ENCODE measurements at regions of chr21 and their contacts with region 1.

Region 1: DNA sequence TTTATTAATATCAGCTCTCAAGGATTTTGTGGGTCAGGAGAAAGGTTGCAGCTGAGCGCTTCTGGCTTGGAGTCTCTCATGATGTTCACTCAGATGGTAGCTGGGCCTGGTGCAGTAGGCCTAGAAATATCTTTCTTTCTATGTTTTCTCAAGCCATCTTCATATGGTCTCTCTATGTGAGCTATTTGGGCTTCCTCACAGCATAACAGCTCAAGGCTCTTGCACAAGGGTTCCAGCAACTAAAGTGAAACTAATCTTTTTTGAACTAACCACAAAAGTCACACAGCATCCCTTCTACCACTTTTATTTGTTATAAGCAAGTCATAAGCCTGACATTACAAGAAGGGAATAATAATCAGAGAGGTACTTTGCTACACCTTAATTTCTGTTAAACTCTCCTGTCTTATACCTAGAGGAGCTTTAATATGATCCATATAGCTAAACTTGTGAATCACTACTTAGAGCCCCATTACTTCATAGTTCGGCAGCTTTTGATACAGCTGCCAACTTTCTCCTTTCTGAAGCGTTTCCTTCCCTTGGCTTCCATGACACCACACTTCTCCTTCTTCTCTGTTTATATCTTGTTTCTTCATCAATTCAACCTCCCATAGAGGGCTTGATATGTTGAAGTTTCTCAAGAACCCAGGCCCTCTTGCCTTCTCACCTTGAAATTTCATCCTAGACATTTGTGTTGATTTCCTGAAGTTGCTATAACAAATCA is 720.2 kb downstream of the LTN1 start:
- DNase-seq: no peak
- H3K4me3 Mint-ChIP-seq: no peak overlapping the region
- H3K27ac Mint-ChIP-seq: no peak overlapping the region
- H3K4me1 Mint-ChIP-seq: no peaks in the 10 kb centered on the region
- H3K27me3 Mint-ChIP-seq: no peaks in the 10 kb centered on the region
- CTCF ChIP-seq: no peak

Region 2: GRCh38 chr21:28186604-28187003 is 85.8 kb before region 1 on chr21:
- CTCF ChIA-PET with region 1: interaction called, 3 read pairs
- POLR2A ChIA-PET with region 1: no interaction called
- intact Hi-C with region 1: loop called (anchors 10 kb)
- DNase-seq: no peak
- H3K4me3 Mint-ChIP-seq: no peak overlapping the region
- H3K27ac Mint-ChIP-seq: no peak overlapping the region
- H3K4me1 Mint-ChIP-seq: no peaks in the 10 kb centered on the region
- H3K27me3 Mint-ChIP-seq: no peaks in the 10 kb centered on the region
- CTCF ChIP-seq: no peak

Region 3: GRCh38 chr21:28336314-28336713 is 63.9 kb after region 1 on chr21:
- CTCF ChIA-PET with region 1: no interaction called
- POLR2A ChIA-PET with region 1: no interaction called
- intact Hi-C with region 1: no loop called
- DNase-seq: peak; percentile 47
- H3K4me3 Mint-ChIP-seq: no peak overlapping the region
- H3K27ac Mint-ChIP-seq: no peak overlapping the region
- H3K4me1 Mint-ChIP-seq: peaks cover 6% of the 10 kb centered on the region
- H3K27me3 Mint-ChIP-seq: no peaks in the 10 kb centered on the region
- CTCF ChIP-seq: peak; percentile 46